CD4-positive, alpha-beta memory T cell (primary cell): ENCODE measurements at regions of chr19 and their contacts with region 1.

Region 1: DNA sequence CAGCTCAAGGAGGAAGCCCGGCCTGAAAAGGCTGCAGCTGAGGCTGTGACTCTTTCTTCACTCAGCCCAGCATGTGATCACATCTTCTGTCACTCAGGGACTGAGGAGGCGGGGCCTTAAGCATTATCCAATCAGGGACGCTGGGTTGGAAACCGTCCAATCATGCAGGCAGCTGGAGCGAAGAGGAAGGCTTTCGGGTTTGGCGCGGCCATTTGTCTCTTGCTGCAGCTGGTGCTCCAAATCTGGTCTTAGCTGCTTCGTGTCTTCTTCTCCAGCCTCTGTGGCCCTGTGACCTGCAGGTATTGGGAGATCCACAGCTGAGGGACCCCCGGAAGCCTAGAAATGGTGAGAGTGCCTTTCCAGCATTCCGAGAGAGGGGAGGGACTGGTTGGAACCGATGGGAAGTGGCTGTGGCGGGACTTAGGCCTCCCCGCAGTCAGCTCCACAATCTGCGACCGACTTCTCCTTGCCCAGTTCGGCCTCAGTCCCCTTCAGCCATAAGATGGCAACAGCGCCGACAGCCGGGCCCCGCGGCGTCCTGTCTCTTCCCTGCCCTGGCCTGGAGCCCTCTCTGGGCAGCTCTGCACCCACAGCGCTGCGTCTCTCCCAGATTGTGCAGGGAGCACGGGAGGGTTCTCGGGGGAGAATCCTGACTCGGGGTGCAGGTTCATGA is at the start of gene ZNF90:
- DNase-seq: peak; percentile 81 to 93 (median 89)
- H3K4me3 ChIP-seq: peak within 1 kb of the TSS; percentile 64 to 81
- H3K4me3 Mint-ChIP-seq: peak within 1 kb of the TSS; percentile 88 to 93 (median 90)
- H3K27ac ChIP-seq: no peak within 1 kb of the TSS
- H3K27ac Mint-ChIP-seq: peak within 1 kb of the TSS; percentile 22 to 79 (median 52)
- H3K4me1 ChIP-seq: peaks cover 11% of the 10 kb centered on the region
- H3K4me1 Mint-ChIP-seq: peaks cover 9 to 31% (median 14%) of the 10 kb centered on the region in 4 donors
- H3K27me3 ChIP-seq: no peaks in the 10 kb centered on the region
- H3K27me3 Mint-ChIP-seq: no peaks in the 10 kb centered on the region
- total RNA-seq, gene ZNF90: 5.4 to 6.2 TPM

Region 2: DNA sequence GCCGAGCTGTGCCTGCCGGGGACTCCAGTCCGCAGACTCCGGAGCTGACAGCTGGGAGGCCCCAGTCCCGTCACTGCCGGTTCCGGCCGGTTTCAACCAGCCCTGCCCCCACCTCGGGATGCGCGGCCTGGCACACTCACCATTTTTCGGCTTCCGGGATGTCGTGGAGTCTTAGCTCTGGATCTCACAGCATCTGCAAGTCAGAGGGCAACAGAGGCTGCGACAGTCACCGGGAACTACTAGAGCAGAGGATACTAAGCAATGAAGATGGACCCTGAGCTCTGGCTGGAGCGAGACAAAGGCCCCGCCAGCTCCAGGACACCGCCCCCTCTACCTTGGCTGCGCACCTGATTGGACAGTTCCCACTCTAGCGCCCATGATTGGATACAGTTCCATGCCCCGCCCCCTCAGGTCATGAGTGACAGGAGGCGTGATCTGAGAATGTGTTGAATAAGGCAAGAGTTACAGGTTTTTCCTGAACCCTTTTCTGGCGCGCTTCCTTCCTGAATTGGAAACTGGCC is 38.7 kb before region 1 on chr19 and contains the start of gene ZNF682:
- CTCF ChIA-PET with region 1: no interaction called
- POLR2A ChIA-PET with region 1: interaction called, 9 read pairs
- intact Hi-C with region 1: loop called (anchors 1 kb)
- DNase-seq: peak; percentile 93 to 97 (median 94)
- H3K4me3 ChIP-seq: peak within 1 kb of the TSS; percentile 79 to 96
- H3K4me3 Mint-ChIP-seq: peak within 1 kb of the TSS; percentile 95 to 98 (median 97)
- H3K27ac ChIP-seq: peak within 1 kb of the TSS; percentile 66
- H3K27ac Mint-ChIP-seq: peak within 1 kb of the TSS; percentile 95 to 98 (median 97)
- H3K4me1 ChIP-seq: peaks cover 13% of the 10 kb centered on the region
- H3K4me1 Mint-ChIP-seq: peaks cover 13 to 27% (median 18%) of the 10 kb centered on the region in 4 donors
- H3K27me3 ChIP-seq: no peaks in the 10 kb centered on the region
- H3K27me3 Mint-ChIP-seq: peaks cover 0 to 3% of the 10 kb centered on the region in 2 donors
- total RNA-seq, gene ZNF682: 7.3 TPM

Region 3: DNA sequence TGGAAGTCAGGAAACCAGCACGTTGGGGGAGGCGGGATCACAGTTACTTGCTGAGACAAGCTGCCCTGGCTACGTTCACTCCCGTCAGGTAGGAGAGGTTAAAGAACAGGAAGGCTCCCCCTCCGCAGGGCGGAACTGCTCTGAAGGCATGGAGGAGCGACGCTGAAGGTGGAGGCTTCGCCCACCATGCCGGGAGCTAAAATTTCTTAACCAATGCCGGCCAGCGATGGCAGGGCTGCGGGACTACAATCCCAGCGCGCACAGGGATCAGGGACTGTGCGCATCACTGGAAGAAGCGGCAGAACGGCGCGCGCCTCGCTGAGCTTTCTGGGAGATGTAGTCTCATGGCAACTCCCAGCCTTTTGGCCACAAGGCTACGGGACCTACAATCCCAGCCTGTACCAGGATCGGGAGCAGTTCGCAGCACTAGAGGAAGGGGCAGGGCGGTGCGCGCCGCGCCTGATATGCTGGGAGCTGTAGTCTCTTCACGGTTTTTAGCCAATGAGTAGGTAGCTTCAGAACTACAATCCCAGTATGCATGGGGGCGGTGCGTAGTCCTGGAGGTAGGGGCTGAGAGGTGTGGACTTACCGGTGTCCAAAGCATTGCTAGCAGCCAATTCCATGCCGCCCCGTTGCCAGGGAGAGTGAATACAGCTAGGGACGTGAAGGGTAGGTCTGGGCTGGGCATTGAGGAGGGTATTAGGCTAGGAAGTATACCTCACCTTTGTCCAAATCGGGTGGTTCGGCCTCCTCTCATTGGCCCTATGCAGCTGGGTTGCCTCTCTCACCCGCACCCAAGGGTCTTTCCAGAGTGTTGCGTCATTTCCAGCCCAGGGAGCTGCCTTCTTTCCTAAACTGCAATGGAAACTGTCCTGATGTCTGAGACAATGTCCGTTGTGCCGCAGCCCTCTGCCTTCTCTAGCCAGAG is 25.8 kb before region 1 on chr19:
- CTCF ChIA-PET with region 1: no interaction called
- POLR2A ChIA-PET with region 1: interaction called, 29 read pairs
- intact Hi-C with region 1: loop called (anchors 2 kb)
- DNase-seq: peak; percentile 43 to 58 (median 48)
- H3K4me3 ChIP-seq: peak overlapping the region; percentile 53 to 95
- H3K4me3 Mint-ChIP-seq: peak overlapping the region; percentile 94 to 100 (median 99)
- H3K27ac ChIP-seq: peak overlapping the region; percentile 62
- H3K27ac Mint-ChIP-seq: peak overlapping the region; percentile 75 to 97 (median 94)
- H3K4me1 ChIP-seq: peaks cover 8% of the 10 kb centered on the region
- H3K4me1 Mint-ChIP-seq: peaks cover 3 to 22% (median 14%) of the 10 kb centered on the region in 4 donors
- H3K27me3 ChIP-seq: no peaks in the 10 kb centered on the region
- H3K27me3 Mint-ChIP-seq: no peaks in the 10 kb centered on the region

Region 4: GRCh38 chr19:20237761-20238623 is 160.1 kb after region 1 on chr19:
- CTCF ChIA-PET with region 1: no interaction called
- POLR2A ChIA-PET with region 1: no interaction called
- intact Hi-C with region 1: loop called (anchors 2 kb)
- DNase-seq: peak; percentile 85 to 89 (median 88)
- H3K4me3 ChIP-seq: peak overlapping the region; percentile 78 to 95
- H3K4me3 Mint-ChIP-seq: peak overlapping the region; percentile 94 to 99 (median 98)
- H3K27ac ChIP-seq: peak overlapping the region; percentile 54
- H3K27ac Mint-ChIP-seq: peak overlapping the region; percentile 79 to 95 (median 92)
- H3K4me1 ChIP-seq: no peaks in the 10 kb centered on the region
- H3K4me1 Mint-ChIP-seq: peaks cover 6 to 13% (median 11%) of the 10 kb centered on the region in 4 donors
- H3K27me3 ChIP-seq: no peaks in the 10 kb centered on the region
- H3K27me3 Mint-ChIP-seq: no peaks in the 10 kb centered on the region